ENCODE measurements at regions of chr3 and their contacts with region 1.

Region 1: GRCh38 chr3:134212906-134213665 is 37.6 kb downstream of the RYK start:
- DNase-seq: peak; percentile 73 to 99
- H3K4me3 ChIP-seq: no peak overlapping the region
- H3K27ac ChIP-seq: no peak overlapping the region
- H3K4me1 ChIP-seq: no peaks in the 10 kb centered on the region
- H3K27me3 ChIP-seq: no peaks in the 10 kb centered on the region
- CTCF ChIP-seq: peak; percentile 82 to 99 (median 90)
- EP300 ChIP-seq: no peak
- POLR2A ChIP-seq: no peak
- RAD21 ChIP-seq: peak; percentile 82 to 89

Region 2: DNA sequence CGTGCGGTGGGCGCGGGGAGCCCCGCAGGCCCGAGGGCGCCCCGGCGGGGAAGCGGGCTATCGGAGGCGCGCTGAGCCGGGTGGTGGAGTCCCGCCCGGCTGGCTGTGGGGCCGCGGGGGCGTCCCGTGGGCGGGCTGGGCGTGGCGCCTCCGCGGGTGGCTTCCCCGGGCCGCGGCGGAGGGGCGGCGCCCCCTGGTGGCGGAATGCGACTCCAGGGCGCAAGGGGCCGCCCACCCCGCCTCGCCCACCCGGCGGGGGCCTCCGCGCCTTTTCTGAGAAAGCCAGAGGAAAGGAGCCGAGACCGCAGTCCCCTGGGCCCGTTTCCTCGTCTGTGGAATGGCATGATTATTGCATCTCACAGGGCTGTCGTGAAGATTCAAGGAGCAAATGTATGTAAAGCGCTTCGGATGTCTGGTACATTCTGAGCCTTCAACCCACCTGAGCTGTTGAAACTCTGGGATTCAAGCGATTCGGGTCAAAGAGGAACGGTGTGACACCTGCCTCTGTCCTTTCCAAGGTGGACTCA is 285.5 kb before region 1 on chr3:
- CTCF ChIA-PET with region 1: interaction called, 34 read pairs
- POLR2A ChIA-PET with region 1: no interaction called
- DNase-seq: peak in 1 of 2 experiments; percentile 87
- H3K4me3 ChIP-seq: peak overlapping the region; percentile 34 to 72 (median 56)
- H3K27ac ChIP-seq: no peak overlapping the region
- H3K4me1 ChIP-seq: peaks cover 0 to 9% (median 4%) of the 10 kb centered on the region in 4 experiments; a peak in 5 of 7 replicates
- H3K27me3 ChIP-seq: peaks cover 0 to 21% (median 16%) of the 10 kb centered on the region in 4 experiments; a peak in 5 of 7 replicates
- CTCF ChIP-seq: peak; percentile 58 to 77 (median 74)
- EP300 ChIP-seq: no peak
- POLR2A ChIP-seq: no peak
- RAD21 ChIP-seq: peak; percentile 35 to 67; a peak in 3 of 4 replicates

Region 3: DNA sequence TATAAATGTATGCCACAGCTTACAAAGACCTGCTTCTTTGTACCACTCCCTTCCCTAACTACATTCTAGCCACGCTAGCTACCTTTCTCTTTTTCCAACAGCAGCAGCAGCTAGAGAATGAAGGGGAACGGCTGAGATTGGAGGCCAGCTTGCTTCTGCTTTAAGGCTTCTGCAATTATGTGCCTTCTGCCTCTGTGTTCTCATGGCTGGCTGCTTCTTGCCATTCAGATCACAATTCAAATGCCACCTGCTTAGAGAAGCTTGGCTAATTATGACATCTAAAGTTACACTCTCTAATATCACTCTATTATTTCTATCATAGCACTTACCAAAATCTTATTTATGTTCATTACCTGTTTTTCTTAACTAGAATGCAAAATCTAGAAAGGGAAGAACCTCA is 57.6 kb before region 1 on chr3:
- CTCF ChIA-PET with region 1: interaction called, 13 read pairs
- POLR2A ChIA-PET with region 1: no interaction called
- DNase-seq: no peak
- H3K4me3 ChIP-seq: no peak overlapping the region
- H3K27ac ChIP-seq: no peak overlapping the region
- H3K4me1 ChIP-seq: no peaks in the 10 kb centered on the region
- H3K27me3 ChIP-seq: no peaks in the 10 kb centered on the region
- CTCF ChIP-seq: no peak
- EP300 ChIP-seq: no peak
- POLR2A ChIP-seq: no peak
- RAD21 ChIP-seq: no peak

Region 4: GRCh38 chr3:134232151-134232550 is 19.1 kb after region 1 on chr3:
- CTCF ChIA-PET with region 1: interaction called, 88 read pairs
- POLR2A ChIA-PET with region 1: interaction called, 3 read pairs
- DNase-seq: no peak
- H3K4me3 ChIP-seq: no peak overlapping the region
- H3K27ac ChIP-seq: no peak overlapping the region
- H3K4me1 ChIP-seq: peaks cover 0 to 3% (median 0%) of the 10 kb centered on the region in 4 experiments; a peak in 1 of 7 replicates
- H3K27me3 ChIP-seq: no peaks in the 10 kb centered on the region
- CTCF ChIP-seq: no peak
- EP300 ChIP-seq: no peak
- POLR2A ChIP-seq: no peak
- RAD21 ChIP-seq: no peak

Region 5: DNA sequence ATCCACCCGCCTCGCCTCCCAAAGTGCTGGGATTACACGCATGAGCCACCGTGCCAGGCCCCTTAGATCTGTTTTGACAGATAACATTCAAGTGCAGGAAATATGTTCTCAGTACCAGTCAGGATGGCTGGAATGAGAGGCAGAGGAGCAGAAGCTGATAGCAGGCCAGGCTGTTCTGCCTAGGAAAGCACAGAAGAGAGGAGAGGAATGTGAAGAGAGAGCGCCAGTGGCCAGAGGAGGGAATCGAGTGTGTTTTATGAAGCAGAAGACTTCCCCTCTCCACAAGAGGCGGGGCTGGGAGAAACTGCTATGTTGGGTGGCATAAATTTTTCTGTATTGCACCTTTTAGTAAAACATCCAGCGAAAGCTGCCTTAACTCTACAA is 69.6 kb after region 1 on chr3:
- CTCF ChIA-PET with region 1: interaction called, 17 read pairs
- POLR2A ChIA-PET with region 1: no interaction called
- DNase-seq: peak in 1 of 2 experiments; percentile 37
- H3K4me3 ChIP-seq: no peak overlapping the region
- H3K27ac ChIP-seq: no peak overlapping the region
- H3K4me1 ChIP-seq: no peaks in the 10 kb centered on the region
- H3K27me3 ChIP-seq: no peaks in the 10 kb centered on the region
- CTCF ChIP-seq: no peak
- EP300 ChIP-seq: no peak
- POLR2A ChIP-seq: no peak
- RAD21 ChIP-seq: no peak

Region 6: DNA sequence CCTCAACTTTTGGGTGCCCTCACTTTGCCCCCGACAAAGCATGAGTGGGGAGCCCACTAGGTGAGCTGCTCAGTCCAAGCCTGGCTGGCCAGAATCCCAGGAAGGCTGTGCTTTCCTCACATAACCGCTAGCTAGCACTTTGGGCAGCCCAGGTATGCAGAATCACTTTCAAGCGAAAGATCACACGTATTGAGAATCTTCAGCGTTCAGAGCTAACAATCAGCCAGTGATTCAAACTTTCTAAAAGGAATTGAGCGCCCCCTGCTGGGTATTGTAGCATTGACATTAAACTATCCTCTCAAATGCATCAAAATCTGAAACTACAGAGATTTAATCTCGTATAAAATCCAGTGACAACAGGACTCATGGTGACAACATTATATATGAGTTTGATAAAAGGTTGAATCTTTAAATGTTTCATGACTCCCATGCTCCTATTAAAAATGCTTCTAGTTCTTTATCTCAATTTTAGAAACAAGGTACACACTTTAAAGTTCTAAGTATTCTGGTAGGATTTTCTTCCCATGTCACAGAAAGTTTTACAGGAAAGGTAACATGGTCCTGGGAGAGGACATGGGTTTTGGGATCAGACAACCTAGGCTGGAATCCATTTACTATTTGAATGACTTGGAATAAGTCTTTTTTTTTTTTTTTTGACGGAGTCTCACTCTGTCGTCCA is 260.9 kb after region 1 on chr3:
- CTCF ChIA-PET with region 1: interaction called, 36 read pairs
- POLR2A ChIA-PET with region 1: no interaction called
- DNase-seq: peak in 1 of 2 experiments; percentile 88
- H3K4me3 ChIP-seq: no peak overlapping the region
- H3K27ac ChIP-seq: no peak overlapping the region
- H3K4me1 ChIP-seq: peaks cover 0 to 3% (median 1%) of the 10 kb centered on the region in 4 experiments; a peak in 3 of 7 replicates
- H3K27me3 ChIP-seq: no peaks in the 10 kb centered on the region; a peak in 1 of 7 replicates
- CTCF ChIP-seq: peak in 2 of 3 experiments; percentile 55 to 72; a peak in 3 of 4 replicates
- EP300 ChIP-seq: no peak
- POLR2A ChIP-seq: no peak
- RAD21 ChIP-seq: peak; percentile 85 to 89